ENCODE measurements at regions of chr1 and their contacts with region 1.

Region 1: DNA sequence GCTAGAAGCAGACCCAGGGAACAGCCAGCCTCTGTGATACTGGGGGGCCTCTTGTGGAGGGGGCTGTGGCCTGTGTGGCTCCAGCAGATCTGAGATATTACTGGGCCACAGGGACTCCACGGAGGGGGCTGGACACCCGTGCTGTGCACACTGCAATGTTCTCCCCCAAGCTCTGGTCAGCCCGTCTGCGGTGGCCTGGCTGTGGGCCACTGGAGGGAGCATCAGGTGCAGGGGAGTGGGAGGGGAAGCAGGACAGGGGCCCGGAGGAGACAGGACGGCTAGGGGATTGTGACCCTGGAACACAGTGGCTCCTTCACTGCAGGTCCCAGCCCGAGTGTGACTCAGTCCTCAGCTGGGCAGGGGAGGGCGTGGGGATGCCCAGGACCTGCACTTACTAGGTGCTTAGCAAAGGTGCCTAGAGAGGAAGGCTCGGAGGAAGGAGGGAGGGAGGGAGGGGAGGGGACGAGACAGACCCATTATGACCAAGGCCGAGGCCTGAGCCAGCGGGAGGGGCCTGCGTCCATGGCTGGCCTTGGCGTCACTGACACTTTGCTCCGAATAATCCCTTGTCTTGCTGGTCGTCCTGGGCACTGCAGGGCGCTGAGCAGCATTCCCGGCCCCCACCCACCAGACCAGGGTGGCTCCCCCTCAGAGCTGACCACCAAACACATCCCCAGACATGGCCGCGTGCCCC is 44.2 kb downstream of the PRDM16 start:
- DNase-seq: no peak
- H3K4me3 ChIP-seq: peak overlapping the region in 1 of 2 donors; percentile 7
- H3K27ac ChIP-seq: peak overlapping the region; percentile 51 to 85
- H3K4me1 ChIP-seq: peaks cover 0 to 90% (median 71%) of the 10 kb centered on the region in 4 donors
- H3K27me3 ChIP-seq: no peaks in the 10 kb centered on the region
- CTCF ChIP-seq: peak; percentile 9 to 26

Region 2: GRCh38 chr1:2840036-2840809 is 273.0 kb before region 1 on chr1:
- intact Hi-C with region 1: no loop called
- DNase-seq: no peak
- H3K4me3 ChIP-seq: no peak overlapping the region
- H3K27ac ChIP-seq: no peak overlapping the region
- H3K4me1 ChIP-seq: no peaks in the 10 kb centered on the region
- H3K27me3 ChIP-seq: peaks cover 0 to 10% of the 10 kb centered on the region in 2 donors
- CTCF ChIP-seq: no peak

Region 3: DNA sequence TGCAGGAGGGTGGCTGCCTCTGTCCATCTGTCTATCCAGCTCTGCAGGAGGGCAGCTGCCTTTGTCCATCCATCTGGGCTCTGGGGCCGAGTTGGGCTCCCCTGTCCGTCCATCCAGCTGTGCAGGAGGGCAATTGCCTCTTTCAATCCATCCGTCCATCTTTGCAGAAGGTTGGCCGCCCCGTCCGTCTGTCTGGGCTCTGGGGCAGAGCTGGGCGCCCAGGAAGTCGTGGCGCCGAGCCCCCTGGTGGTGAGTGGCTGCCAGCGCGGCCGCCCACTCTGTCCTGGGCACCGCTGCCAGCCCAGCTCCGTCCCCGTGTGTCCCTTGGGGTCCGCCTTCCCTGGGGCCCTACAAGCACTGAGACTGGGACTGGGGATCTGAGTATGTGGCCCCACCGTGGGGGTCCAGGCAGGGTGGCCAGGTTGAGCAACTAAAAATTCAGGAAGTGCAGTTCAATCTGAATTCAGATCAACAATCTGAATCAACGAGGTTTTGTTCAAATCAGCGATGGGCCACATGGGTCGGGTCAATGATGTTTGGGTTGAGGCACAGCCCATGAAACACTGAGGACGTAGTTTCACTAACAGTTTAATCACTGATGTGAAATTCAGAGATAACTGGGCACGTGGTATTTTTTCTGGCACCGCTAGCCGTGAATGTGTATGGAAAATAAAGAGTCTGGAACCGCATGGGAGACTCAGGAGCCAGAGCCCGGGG is 191.1 kb before region 1 on chr1:
- intact Hi-C with region 1: no loop called
- DNase-seq: peak in 1 of 2 donors; percentile 76
- H3K4me3 ChIP-seq: no peak overlapping the region
- H3K27ac ChIP-seq: peak overlapping the region in 1 of 2 donors; percentile 46
- H3K4me1 ChIP-seq: peaks cover 0 to 34% (median 27%) of the 10 kb centered on the region in 4 donors
- H3K27me3 ChIP-seq: peaks cover 0 to 5% of the 10 kb centered on the region in 2 donors
- CTCF ChIP-seq: peak; percentile 71 to 75

Region 4: GRCh38 chr1:3078430-3078861 is 34.7 kb before region 1 on chr1:
- intact Hi-C with region 1: loop called (anchors 5 kb)
- DNase-seq: no peak
- H3K4me3 ChIP-seq: peak overlapping the region; percentile 31 to 33
- H3K27ac ChIP-seq: peak overlapping the region; percentile 98 to 100
- H3K4me1 ChIP-seq: peaks cover 0 to 100% (median 84%) of the 10 kb centered on the region in 4 donors
- H3K27me3 ChIP-seq: no peaks in the 10 kb centered on the region
- CTCF ChIP-seq: no peak

Region 5: DNA sequence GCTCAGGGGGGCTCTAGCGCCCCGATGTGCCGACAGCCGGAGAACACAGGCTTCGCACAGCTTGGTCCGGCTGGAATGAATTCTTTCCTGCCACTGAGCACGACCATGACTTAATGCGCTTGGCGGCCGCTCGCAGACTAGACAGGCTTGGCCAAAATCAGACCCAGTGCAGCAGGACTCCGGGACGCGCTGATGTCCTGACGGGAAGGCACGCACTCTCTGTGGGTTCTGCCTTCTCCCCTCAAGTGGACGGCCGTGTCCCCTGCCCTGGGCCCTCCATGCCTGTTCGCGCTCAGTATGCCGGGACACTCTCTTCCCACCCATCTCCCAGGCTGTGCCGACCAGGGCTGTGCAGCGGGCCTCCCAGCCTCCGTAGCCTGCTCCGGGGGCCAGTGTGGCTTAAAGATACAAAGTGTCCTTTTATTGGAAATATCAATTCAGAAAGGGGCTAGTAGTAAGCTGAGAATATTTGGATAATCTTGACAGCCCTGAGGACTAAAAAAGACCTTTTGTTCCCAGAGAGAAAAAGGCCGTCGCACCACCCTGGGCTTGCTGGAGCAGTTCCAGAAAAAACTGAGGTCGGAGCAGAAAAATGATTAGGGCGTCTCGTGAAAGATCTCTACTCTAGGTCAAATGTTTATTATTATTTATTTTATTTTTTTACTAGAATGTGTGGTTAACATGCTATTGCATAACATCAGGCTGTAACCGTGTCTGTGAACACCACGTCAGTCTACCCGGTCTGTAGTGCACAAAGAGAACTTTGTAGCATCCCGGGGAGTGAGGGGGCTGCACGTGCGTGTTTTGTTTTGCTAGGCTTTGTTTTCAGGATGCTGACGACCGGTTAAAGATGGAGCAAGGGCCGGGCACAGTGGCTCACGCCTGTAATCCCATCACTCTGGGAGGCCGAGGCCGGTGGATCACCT is 253.2 kb after region 1 on chr1:
- intact Hi-C with region 1: no loop called
- DNase-seq: peak; percentile 70 to 91
- H3K4me3 ChIP-seq: peak overlapping the region; percentile 30 to 43
- H3K27ac ChIP-seq: peak overlapping the region; percentile 89 to 94
- H3K4me1 ChIP-seq: peaks cover 0 to 98% (median 81%) of the 10 kb centered on the region in 4 donors
- H3K27me3 ChIP-seq: no peaks in the 10 kb centered on the region
- CTCF ChIP-seq: no peak

Measured in tibial artery (tissue), 4 donors.